ENCODE measurements at regions of chr19 and their contacts with region 1.

Region 1: GRCh38 chr19:45558399-45558878 is 26.2 kb downstream of the OPA3 start:
- DNase-seq: peak; percentile 46 to 89 (median 62)
- ATAC-seq: peak; percentile 98
- H3K4me3 ChIP-seq: no peak overlapping the region
- H3K4me3 Mint-ChIP-seq: no peak overlapping the region
- H3K27ac ChIP-seq: no peak overlapping the region
- H3K27ac Mint-ChIP-seq: peak overlapping the region; percentile 4
- H3K4me1 ChIP-seq: peaks cover 30% of the 10 kb centered on the region
- H3K4me1 Mint-ChIP-seq: peaks cover 41% of the 10 kb centered on the region
- H3K27me3 ChIP-seq: no peaks in the 10 kb centered on the region
- H3K27me3 Mint-ChIP-seq: no peaks in the 10 kb centered on the region
- CTCF ChIP-seq: peak; percentile 62

Region 2: GRCh38 chr19:45423589-45424190 is 134.7 kb before region 1 on chr19 and contains the start of gene ERCC1:
- CTCF ChIA-PET with region 1: interaction called, 3 read pairs
- POLR2A ChIA-PET with region 1: no interaction called
- intact Hi-C with region 1: loop called in 1 of 2 experiments (anchors 5 kb)
- DNase-seq: peak in 7 of 14 experiments; percentile 36 to 87 (median 48)
- ATAC-seq: peak; percentile 58
- H3K4me3 ChIP-seq: peak within 1 kb of the TSS; percentile 90
- H3K4me3 Mint-ChIP-seq: peak within 1 kb of the TSS; percentile 92
- H3K27ac ChIP-seq: peak within 1 kb of the TSS; percentile 54 to 75
- H3K27ac Mint-ChIP-seq: peak within 1 kb of the TSS; percentile 80
- H3K4me1 ChIP-seq: peaks cover 53% of the 10 kb centered on the region
- H3K4me1 Mint-ChIP-seq: peaks cover 48% of the 10 kb centered on the region
- H3K27me3 ChIP-seq: peaks cover 4 to 5% of the 10 kb centered on the region in 2 experiments
- H3K27me3 Mint-ChIP-seq: peaks cover 9% of the 10 kb centered on the region
- CTCF ChIP-seq: no peak
- total RNA-seq, gene ERCC1: 32.5 to 32.6 TPM

Region 3: GRCh38 chr19:45496349-45496953 is 62.0 kb before region 1 on chr19:
- CTCF ChIA-PET with region 1: interaction called, 8 read pairs
- POLR2A ChIA-PET with region 1: no interaction called
- intact Hi-C with region 1: loop called in 1 of 2 experiments (anchors 1 kb)
- DNase-seq: peak in 9 of 14 experiments; percentile 28 to 74 (median 50)
- ATAC-seq: peak; percentile 28
- H3K4me3 ChIP-seq: peak overlapping the region; percentile 65
- H3K4me3 Mint-ChIP-seq: peak overlapping the region; percentile 81
- H3K27ac ChIP-seq: no peak overlapping the region
- H3K27ac Mint-ChIP-seq: no peak overlapping the region
- H3K4me1 ChIP-seq: peaks cover 66% of the 10 kb centered on the region
- H3K4me1 Mint-ChIP-seq: peaks cover 43% of the 10 kb centered on the region
- H3K27me3 ChIP-seq: peaks cover 23 to 25% of the 10 kb centered on the region in 2 experiments
- H3K27me3 Mint-ChIP-seq: peaks cover 33% of the 10 kb centered on the region
- CTCF ChIP-seq: no peak

Region 4: DNA sequence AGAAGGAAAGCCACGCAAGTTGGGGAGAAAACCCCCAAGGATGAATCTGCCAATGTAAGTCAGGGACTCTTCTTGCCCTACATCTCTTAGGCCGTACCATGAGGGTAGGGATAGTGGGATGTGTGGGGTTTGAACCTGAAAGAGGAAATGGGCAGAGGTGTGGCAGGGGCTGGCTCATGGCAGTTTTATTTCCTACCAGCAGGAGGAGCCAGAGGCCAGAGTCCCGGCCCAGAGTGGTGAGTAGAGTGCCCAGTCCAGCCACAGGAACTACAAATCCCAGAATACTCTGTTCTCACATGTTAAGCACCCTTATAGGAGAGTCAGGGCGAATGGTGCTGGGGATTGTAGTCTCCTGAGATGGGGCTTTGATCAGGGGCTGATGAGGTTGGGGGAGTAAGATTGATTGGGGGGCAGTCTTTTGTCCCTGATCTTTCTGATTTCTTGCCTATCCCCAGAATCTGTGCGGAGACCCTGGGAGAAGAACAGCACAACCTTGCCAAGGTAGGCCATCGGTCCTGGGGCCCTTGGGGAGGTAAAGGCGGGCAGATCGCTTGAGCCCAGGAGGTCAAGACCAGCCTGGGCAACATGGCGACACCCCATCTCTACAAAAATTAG is 34.7 kb before region 1 on chr19:
- CTCF ChIA-PET with region 1: interaction called, 9 read pairs
- POLR2A ChIA-PET with region 1: interaction called, 3 read pairs
- intact Hi-C with region 1: loop called (anchors 1 to 2 kb)
- DNase-seq: peak; percentile 54 to 92 (median 66)
- ATAC-seq: peak; percentile 99
- H3K4me3 ChIP-seq: no peak overlapping the region
- H3K4me3 Mint-ChIP-seq: no peak overlapping the region
- H3K27ac ChIP-seq: no peak overlapping the region
- H3K27ac Mint-ChIP-seq: peak overlapping the region; percentile 53
- H3K4me1 ChIP-seq: peaks cover 11% of the 10 kb centered on the region
- H3K4me1 Mint-ChIP-seq: peaks cover 19% of the 10 kb centered on the region
- H3K27me3 ChIP-seq: no peaks in the 10 kb centered on the region
- H3K27me3 Mint-ChIP-seq: no peaks in the 10 kb centered on the region
- CTCF ChIP-seq: peak; percentile 76

Region 5: DNA sequence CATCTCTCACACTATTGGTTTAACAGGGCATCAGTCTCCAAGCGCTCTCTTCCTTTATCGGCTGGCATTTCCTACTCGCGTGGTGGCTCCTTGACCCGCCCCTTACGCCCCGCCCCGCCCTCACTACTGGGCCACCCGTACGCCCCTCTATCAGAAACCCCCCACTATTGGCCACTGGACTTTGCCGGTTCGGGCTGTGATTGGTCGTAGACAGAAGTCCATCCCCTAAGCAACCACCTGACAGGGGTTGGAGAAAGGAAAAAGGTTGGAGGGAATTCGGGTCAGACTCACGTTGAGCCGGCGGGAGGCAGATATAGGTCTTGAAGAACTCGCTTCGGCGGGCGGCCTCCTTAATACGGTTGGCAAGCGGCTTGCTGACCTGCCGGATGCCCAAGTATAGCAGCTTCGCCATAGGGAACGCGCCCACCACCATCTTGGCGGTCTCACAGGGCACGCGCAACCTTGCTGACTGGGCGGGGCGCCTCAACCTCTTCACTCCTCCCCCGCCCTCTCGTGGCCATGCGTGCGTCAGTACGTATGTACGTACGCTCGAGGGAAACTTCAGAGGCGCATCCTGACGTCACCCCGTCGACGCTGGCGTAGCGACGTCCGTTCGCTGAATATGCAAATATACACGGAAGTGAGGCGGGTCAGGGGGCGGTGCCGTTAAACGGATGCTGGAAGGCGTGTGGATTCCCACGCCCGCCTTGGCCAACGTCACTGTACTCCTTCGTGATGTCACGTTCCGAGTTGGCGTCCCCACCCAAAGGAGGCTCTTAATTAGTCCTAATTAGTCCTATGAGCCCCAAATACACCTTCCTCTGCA is 26.1 kb after region 1 on chr19 and contains the start of gene OPA3:
- CTCF ChIA-PET with region 1: interaction called, 5 read pairs
- POLR2A ChIA-PET with region 1: interaction called, 10 read pairs
- intact Hi-C with region 1: no loop called
- DNase-seq: peak; percentile 97 to 100 (median 99)
- ATAC-seq: peak; percentile 85
- H3K4me3 ChIP-seq: peak within 1 kb of the TSS; percentile 95
- H3K4me3 Mint-ChIP-seq: peak within 1 kb of the TSS; percentile 88
- H3K27ac ChIP-seq: peak within 1 kb of the TSS; percentile 98 to 99
- H3K27ac Mint-ChIP-seq: peak within 1 kb of the TSS; percentile 98
- H3K4me1 ChIP-seq: peaks cover 21% of the 10 kb centered on the region
- H3K4me1 Mint-ChIP-seq: peaks cover 26% of the 10 kb centered on the region
- H3K27me3 ChIP-seq: peaks cover 0 to under 1% of the 10 kb centered on the region in 2 experiments
- H3K27me3 Mint-ChIP-seq: peaks cover 12% of the 10 kb centered on the region
- CTCF ChIP-seq: no peak
- total RNA-seq, gene OPA3: 3.1 to 3.2 TPM

Measured in CD4-positive, alpha-beta T cell (primary cell).